CD8-positive, alpha-beta T cell (primary cell): ENCODE measurements at regions of chr9 and their contacts with region 1.

Region 1: GRCh38 chr9:79565245-79565644 is 6.5 kb upstream of the TLE4 start:
- DNase-seq: no peak
- ATAC-seq: no peak
- H3K4me3 ChIP-seq: no peak overlapping the region
- H3K4me3 Mint-ChIP-seq: no peak overlapping the region
- H3K27ac ChIP-seq: no peak overlapping the region
- H3K27ac Mint-ChIP-seq: no peak overlapping the region
- H3K4me1 ChIP-seq: peaks cover 4% of the 10 kb centered on the region
- H3K4me1 Mint-ChIP-seq: peaks cover 4% of the 10 kb centered on the region
- H3K27me3 ChIP-seq: peaks cover 0 to 5% of the 10 kb centered on the region in 2 experiments
- H3K27me3 Mint-ChIP-seq: peaks cover 4% of the 10 kb centered on the region
- CTCF ChIP-seq: no peak

Region 2: GRCh38 chr9:79526149-79526672 is 39.0 kb before region 1 on chr9:
- CTCF ChIA-PET with region 1: no interaction called
- POLR2A ChIA-PET with region 1: no interaction called
- intact Hi-C with region 1: loop called in 1 of 2 experiments (anchors 5 kb)
- DNase-seq: no peak
- ATAC-seq: no peak
- H3K4me3 ChIP-seq: no peak overlapping the region
- H3K4me3 Mint-ChIP-seq: no peak overlapping the region
- H3K27ac ChIP-seq: no peak overlapping the region
- H3K27ac Mint-ChIP-seq: no peak overlapping the region
- H3K4me1 ChIP-seq: no peaks in the 10 kb centered on the region
- H3K4me1 Mint-ChIP-seq: no peaks in the 10 kb centered on the region
- H3K27me3 ChIP-seq: no peaks in the 10 kb centered on the region
- H3K27me3 Mint-ChIP-seq: no peaks in the 10 kb centered on the region
- CTCF ChIP-seq: no peak

Region 3: DNA sequence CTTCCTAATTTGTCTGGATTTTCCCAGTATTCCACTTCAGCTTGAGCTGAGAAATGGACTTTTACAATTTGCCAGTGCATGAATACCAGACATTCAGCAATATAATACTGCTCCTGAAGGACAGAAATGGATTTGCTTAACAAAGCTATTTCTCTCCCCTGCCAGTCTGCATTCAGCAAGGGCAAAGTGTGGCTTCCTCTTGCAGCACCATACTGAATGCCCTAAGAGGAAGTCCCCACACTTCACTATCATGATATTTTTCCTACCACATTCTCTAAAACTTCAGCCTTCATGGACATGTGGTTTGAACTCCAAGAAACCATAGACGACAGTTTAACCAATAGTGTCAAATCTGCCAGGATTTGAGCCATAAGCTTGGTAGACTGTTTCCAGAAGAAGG is 13.3 kb before region 1 on chr9:
- CTCF ChIA-PET with region 1: interaction called, 10 read pairs
- POLR2A ChIA-PET with region 1: no interaction called
- intact Hi-C with region 1: no loop called
- DNase-seq: no peak
- ATAC-seq: no peak
- H3K4me3 ChIP-seq: no peak overlapping the region
- H3K4me3 Mint-ChIP-seq: no peak overlapping the region
- H3K27ac ChIP-seq: no peak overlapping the region
- H3K27ac Mint-ChIP-seq: no peak overlapping the region
- H3K4me1 ChIP-seq: no peaks in the 10 kb centered on the region
- H3K4me1 Mint-ChIP-seq: no peaks in the 10 kb centered on the region
- H3K27me3 ChIP-seq: no peaks in the 10 kb centered on the region
- H3K27me3 Mint-ChIP-seq: no peaks in the 10 kb centered on the region
- CTCF ChIP-seq: no peak